Mammary epithelial cell (primary cell): ENCODE measurements at regions of chr7 and their contacts with region 1.

Region 1: DNA sequence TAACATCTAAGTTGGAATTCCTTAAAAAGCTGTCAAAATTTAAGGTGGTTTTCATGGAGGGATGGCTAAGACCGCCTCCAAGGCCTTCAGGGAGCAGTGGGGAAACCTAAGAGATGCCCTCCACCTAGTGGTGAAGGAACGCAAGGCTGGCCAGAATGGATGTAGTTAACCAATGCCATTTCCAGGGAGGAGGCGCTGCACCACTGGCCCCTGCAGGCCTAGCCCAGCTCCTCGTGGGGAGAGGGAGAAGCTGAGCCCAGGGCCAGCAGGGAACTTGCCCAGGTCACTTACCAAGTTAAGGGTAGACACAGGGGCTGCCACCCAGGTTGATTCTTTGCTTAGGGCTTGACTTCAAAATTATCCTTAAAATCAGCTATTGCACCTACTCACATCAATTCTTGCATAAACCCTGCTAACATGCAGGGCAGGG is 32.0 kb downstream of the FIGNL1 start:
- DNase-seq: peak; percentile 71
- H3K4me3 ChIP-seq: no peak overlapping the region
- H3K27ac ChIP-seq: no peak overlapping the region
- H3K4me1 ChIP-seq: no peaks in the 10 kb centered on the region
- H3K27me3 ChIP-seq: no peaks in the 10 kb centered on the region
- CTCF ChIP-seq: peak; percentile 97 to 98

Region 2: DNA sequence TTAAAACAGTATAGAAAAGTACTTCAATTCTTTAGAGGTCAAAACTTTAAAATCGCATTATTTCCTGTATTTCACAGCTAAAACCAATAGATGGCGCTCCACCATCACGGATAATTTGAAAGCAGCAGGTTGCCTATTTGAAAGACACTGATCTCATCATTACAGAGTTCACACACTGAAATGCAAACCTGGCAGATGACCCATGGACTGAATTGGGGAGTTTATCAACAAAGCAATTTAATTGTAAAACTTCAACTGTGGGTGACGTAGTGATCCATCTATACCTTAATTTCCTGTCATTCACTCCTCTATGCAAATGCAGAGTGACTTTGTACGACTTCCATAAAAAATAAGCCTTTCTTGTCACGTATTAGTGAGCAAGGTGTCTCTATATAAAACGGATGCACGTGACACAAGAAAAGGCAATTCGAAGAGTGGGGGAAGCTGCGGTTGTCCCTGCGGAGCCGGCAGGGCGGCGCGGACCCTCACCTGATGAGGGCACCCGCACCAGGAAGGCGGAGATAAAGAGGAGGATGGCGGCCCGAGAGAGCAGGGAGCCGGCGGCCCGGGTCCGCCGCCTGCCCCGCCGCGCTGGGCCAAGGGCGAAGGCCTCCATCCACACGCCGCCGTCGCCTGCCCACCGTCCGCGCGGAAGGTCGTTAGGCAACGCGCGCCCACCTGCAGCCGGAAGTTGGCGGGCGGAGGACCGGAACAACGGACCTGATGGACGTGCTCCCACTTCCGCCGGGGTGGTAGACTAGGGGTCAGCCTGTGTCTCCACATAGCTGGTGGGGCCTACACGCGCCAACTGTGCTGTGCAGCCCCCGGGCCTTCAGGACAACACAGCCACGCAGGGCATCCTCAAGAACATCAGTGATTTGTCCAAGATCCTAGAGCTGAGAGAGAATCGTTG is 325.3 kb before region 1 on chr7 and contains the start of gene ZPBP:
- CTCF ChIA-PET with region 1: interaction called, 4 read pairs
- dilution Hi-C with region 1: no loop called
- in situ Hi-C with region 1: no loop called
- intact Hi-C with region 1: loop called (anchors 1 kb)
- DNase-seq: peak; percentile 25
- H3K4me3 ChIP-seq: peak within 1 kb of the TSS in 2 of 3 experiments; percentile 38 to 40
- H3K27ac ChIP-seq: no peak within 1 kb of the TSS
- H3K4me1 ChIP-seq: no peaks in the 10 kb centered on the region
- H3K27me3 ChIP-seq: peaks cover 4% of the 10 kb centered on the region
- CTCF ChIP-seq: peak; percentile 67 to 71
- total RNA-seq, gene ZPBP: 0.17 TPM in 1 of 2 donors, not detected in the other

Region 3: DNA sequence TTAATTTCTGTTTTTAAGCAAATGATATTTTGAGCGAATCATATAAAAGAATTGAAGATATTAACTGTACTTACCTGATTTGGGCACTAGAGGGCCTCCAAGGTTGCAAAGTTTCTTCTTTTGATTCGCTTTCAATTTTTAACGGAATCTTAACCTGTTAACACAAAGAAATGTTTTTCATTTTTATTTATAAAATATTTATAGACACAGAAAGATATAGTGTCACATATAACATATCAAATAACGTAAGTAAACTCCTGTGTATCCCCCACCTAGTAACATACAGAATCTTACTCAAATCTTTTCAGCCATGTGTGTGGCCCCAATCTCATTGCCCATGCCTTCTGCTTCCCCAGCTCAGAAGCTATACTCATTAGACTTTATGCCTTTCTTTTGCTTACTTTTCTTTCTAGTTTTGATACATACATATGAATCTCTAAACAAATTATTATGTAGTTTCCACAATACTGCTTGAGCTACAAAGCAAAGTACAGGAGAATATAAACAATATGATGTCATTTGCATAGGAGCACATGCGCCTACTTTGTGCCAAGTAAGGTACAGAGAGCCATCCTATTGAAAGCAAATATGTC is 275.6 kb before region 1 on chr7:
- CTCF ChIA-PET with region 1: no interaction called
- dilution Hi-C with region 1: no loop called
- in situ Hi-C with region 1: no loop called
- intact Hi-C with region 1: loop called (anchors 1 kb)
- DNase-seq: no peak
- H3K4me3 ChIP-seq: no peak overlapping the region
- H3K27ac ChIP-seq: no peak overlapping the region
- H3K4me1 ChIP-seq: no peaks in the 10 kb centered on the region
- H3K27me3 ChIP-seq: no peaks in the 10 kb centered on the region
- CTCF ChIP-seq: peak; percentile 61 to 67

Region 4: GRCh38 chr7:50455658-50456057 is 37.6 kb after region 1 on chr7:
- CTCF ChIA-PET with region 1: no interaction called
- dilution Hi-C with region 1: no loop called
- in situ Hi-C with region 1: no loop called
- intact Hi-C with region 1: no loop called
- DNase-seq: no peak
- H3K4me3 ChIP-seq: no peak overlapping the region
- H3K27ac ChIP-seq: no peak overlapping the region
- H3K4me1 ChIP-seq: peaks cover 2% of the 10 kb centered on the region
- H3K27me3 ChIP-seq: no peaks in the 10 kb centered on the region
- CTCF ChIP-seq: no peak